ENCODE measurements at regions of chr20 and their contacts with region 1.

Region 1: DNA sequence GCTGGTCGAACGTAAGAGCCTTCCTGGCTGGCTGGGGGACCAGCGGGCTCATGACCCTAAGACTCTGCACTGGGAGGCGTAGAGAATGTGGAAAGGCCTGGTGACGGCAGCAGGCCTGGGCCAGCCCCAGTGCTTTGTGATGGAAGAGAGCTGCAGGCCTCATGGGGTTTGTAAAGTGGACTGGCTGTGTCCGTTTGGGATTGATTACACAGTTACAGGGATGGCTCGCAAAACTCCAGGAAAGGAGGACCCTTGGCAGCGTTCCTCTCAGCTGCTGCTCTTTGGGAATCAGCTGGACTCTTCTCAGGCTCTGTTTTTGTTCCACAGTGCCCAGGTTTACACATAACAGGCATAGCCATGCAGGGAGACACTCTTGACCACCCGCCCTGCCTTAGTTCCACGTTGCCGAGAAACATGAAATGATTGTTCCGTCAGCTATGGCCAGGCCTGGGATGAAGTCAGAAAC is 88.9 kb downstream of the SLX4IP start:
- DNase-seq: no peak
- H3K4me3 ChIP-seq: no peak overlapping the region
- H3K27ac ChIP-seq: peak overlapping the region in 1 of 2 experiments; percentile 10; a peak in 2 of 4 replicates
- H3K4me1 ChIP-seq: peaks cover 27 to 50% of the 10 kb centered on the region in 2 experiments
- H3K27me3 ChIP-seq: no peaks in the 10 kb centered on the region
- CTCF ChIP-seq: no peak
- EP300 ChIP-seq: no peak
- RAD21 ChIP-seq: no peak

Region 2: DNA sequence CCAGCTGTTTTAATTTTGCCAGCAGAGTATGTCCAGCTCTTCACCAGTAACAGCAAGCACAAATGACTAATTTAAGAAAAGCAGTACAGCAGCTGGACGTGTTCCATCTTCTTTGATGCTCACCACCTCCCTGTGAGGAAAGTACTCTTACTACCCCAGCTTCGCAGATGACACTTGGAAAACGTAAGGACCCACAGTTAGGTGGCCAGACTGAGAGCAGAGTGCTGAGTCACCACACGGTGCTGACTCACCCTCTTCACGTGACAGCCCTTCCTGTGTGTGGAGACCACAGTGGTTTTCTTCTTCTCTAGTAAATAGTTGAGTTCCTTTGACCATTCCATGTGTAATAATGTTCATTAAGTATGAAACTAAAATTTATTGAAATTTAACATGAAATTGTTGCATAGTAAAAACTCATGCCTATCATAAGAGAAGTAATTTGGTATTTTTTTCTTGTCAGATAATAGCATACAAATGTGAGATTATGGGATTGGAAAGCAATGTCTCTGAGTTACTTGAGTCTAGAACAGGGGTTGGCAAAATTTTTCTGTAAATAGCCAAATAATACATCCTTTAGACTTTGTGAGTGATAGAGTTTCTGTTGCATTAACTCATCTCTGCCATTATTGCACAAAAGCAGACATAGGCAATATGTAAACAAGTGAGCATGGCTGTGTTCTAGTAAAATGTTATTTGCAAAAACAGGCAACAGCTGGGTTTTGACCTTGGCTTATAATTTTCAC is 12.4 kb before region 1 on chr20:
- CTCF ChIA-PET with region 1: no interaction called
- POLR2A ChIA-PET with region 1: no interaction called
- DNase-seq: no peak
- H3K4me3 ChIP-seq: no peak overlapping the region; a peak in 1 of 4 replicates
- H3K27ac ChIP-seq: peak overlapping the region; percentile 79 to 94
- H3K4me1 ChIP-seq: peaks cover 30 to 46% of the 10 kb centered on the region in 2 experiments
- H3K27me3 ChIP-seq: no peaks in the 10 kb centered on the region
- CTCF ChIP-seq: no peak
- EP300 ChIP-seq: peak in 1 of 2 experiments; percentile 78; a peak in 2 of 4 replicates
- RAD21 ChIP-seq: no peak

Region 3: GRCh38 chr20:10536531-10536930 is 12.5 kb after region 1 on chr20:
- CTCF ChIA-PET with region 1: interaction called, 10 read pairs
- POLR2A ChIA-PET with region 1: no interaction called
- DNase-seq: no peak
- H3K4me3 ChIP-seq: no peak overlapping the region
- H3K27ac ChIP-seq: peak overlapping the region; percentile 20 to 50; a peak in 2 of 4 replicates
- H3K4me1 ChIP-seq: peaks cover 2 to 33% of the 10 kb centered on the region in 2 experiments; a peak in 2 of 4 replicates
- H3K27me3 ChIP-seq: no peaks in the 10 kb centered on the region
- CTCF ChIP-seq: peak; percentile 66
- EP300 ChIP-seq: no peak
- RAD21 ChIP-seq: peak; percentile 76